Transverse colon (tissue), 4 donors: ENCODE measurements at regions of chr17 and their contacts with region 1.

Region 1: GRCh38 chr17:63445979-63446691 is at the start of gene CYB561:
- DNase-seq: peak; percentile 91
- H3K4me3 ChIP-seq: peak within 1 kb of the TSS; percentile 54 to 75 (median 67)
- H3K27ac ChIP-seq: peak within 1 kb of the TSS; percentile 86 to 93 (median 90)
- H3K4me1 ChIP-seq: peaks cover 12 to 33% (median 26%) of the 10 kb centered on the region in 4 donors
- H3K27me3 ChIP-seq: no peaks in the 10 kb centered on the region
- CTCF ChIP-seq: peak; percentile 5 to 74 (median 60)
- EP300 ChIP-seq: no peak
- POLR2A ChIP-seq: no peak
- total RNA-seq, gene CYB561: 52.6 to 315 (median 68.5) TPM

Region 2: DNA sequence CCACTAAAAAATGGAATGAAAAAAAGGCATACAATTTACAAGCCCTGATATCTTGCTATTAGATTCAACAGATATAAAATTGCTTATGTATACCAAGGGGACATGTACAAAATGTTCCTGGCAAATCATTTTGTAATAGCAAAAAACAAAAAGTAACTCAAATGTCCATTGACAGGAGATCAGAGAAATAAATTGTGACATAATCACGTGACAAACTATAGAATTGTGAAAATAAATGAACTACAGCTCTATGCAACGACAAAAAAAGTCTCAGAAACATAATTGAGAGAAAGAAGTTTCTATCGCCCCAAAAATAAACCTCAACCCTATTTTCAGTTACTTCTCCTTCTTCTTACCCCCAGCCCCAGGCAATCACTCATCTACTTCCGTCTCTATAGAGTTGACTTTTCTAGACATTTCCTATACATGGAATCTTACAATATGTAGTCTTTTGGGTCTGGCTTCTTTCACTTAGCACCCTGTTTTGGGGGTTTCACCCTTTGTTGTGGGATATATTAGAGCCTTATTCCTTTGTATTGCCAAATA is 18.6 kb after region 1 on chr17:
- in situ Hi-C with region 1: no loop called
- intact Hi-C with region 1: no loop called
- DNase-seq: no peak
- H3K4me3 ChIP-seq: no peak overlapping the region
- H3K27ac ChIP-seq: no peak overlapping the region
- H3K4me1 ChIP-seq: peaks cover 0 to 6% (median 0%) of the 10 kb centered on the region in 4 donors
- H3K27me3 ChIP-seq: no peaks in the 10 kb centered on the region
- CTCF ChIP-seq: no peak
- EP300 ChIP-seq: no peak
- POLR2A ChIP-seq: no peak

Region 3: DNA sequence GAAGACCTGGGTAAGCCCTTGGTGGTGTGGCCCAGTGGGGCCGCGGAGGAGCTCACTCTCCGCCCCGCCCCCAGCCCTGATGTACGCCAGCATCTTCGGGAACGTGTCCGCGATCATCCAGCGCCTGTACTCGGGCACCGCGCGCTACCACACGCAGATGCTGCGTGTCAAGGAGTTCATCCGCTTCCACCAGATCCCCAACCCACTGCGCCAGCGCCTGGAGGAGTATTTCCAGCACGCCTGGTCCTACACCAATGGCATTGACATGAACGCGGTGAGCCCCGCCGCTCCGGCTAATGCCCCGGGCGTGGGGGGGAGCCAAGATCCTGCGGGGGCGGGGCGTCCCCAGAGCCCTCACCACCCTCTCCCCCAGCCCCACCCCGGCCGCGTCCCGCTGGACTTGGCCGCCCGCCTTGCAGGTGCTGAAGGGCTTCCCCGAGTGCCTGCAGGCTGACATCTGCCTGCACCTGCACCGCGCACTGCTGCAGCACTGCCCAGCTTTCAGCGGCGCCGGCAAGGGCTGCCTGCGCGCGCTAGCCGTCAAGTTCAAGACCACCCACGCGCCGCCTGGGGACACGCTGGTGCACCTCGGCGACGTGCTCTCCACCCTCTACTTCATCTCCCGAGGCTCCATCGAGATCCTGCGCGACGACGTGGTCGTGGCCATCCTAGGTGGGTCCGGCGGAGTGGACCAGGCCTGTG is 92.0 kb after region 1 on chr17:
- in situ Hi-C with region 1: no loop called
- intact Hi-C with region 1: loop called (anchors 10 kb)
- DNase-seq: no peak
- H3K4me3 ChIP-seq: peak overlapping the region in 2 of 4 donors; percentile 9 to 26
- H3K27ac ChIP-seq: no peak overlapping the region
- H3K4me1 ChIP-seq: peaks cover 6 to 10% (median 8%) of the 10 kb centered on the region in 4 donors
- H3K27me3 ChIP-seq: peaks cover 34% of the 10 kb centered on the region
- CTCF ChIP-seq: no peak
- EP300 ChIP-seq: no peak
- POLR2A ChIP-seq: no peak